Aorta (tissue), 5 donors: ENCODE measurements at regions of chr12 and their contacts with region 1.

Region 1: DNA sequence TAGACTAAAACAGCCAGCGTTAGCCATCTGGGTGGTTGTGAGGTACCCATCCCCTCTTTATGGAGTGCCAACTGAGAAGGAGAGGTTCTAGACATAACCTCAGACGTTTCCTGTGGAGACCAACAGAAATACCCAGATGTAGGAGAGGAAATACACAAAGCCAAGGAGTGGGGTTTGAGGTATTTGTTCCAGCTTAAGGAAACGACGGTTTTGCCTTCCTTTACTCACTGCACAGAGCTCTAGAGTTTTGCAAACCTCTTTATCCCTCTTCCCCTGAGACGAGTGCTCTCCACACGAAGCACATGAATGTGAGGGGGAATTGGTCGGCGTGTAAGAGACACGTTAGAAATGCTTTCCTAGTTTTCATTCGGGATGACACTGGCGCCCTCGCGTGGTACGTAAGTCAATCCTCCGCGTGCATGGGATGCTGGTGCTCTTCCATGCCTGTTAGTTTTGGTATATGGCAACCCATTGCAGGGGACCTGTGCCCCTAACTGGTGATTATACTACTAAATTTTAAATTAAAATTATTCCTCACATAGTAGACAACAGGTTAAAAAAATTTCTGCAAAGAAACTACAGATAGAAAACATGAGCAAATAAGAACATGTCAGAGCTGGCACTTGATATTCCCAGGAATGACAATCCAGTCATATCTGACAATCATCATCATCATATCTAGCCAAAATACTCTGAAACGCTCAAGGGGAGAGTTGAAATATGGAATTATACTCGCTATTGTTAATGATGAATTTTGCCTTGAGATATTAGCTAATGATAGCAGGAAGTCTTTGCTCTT is 121.7 kb downstream of the PPM1H start:
- DNase-seq: peak; percentile 79 to 91
- ATAC-seq: peak; percentile 78
- H3K4me3 ChIP-seq: no peak overlapping the region
- H3K27ac ChIP-seq: no peak overlapping the region
- H3K4me1 ChIP-seq: peaks cover 0 to 4% of the 10 kb centered on the region in 2 donors
- H3K27me3 ChIP-seq: no peaks in the 10 kb centered on the region

Region 2: GRCh38 chr12:62866451-62867082 is 53.3 kb after region 1 on chr12:
- intact Hi-C with region 1: no loop called
- DNase-seq: no peak
- ATAC-seq: peak; percentile 39
- H3K4me3 ChIP-seq: no peak overlapping the region
- H3K27ac ChIP-seq: peak overlapping the region; percentile 87 to 93
- H3K4me1 ChIP-seq: peaks cover 11 to 20% of the 10 kb centered on the region in 2 donors
- H3K27me3 ChIP-seq: no peaks in the 10 kb centered on the region

Region 3: DNA sequence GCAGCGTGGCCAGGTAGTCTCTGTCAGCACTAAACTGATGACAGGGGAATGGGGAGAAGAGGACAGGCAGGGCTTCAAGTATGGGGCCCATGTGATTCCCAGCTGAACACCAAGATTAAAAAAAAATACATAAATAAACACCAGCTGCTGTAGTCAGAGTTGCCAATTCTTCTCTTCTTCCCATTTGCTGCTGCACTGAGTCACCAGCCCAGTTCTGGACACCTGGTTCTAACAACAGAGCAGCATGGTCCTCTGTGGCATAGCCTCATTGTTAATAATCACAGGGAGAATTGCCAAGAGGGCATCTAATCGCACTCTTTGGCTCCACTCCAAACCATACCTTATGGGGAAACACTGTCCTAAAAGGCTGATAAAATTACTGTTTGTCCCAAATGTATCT is 106.6 kb after region 1 on chr12:
- intact Hi-C with region 1: no loop called
- DNase-seq: no peak
- ATAC-seq: no peak
- H3K4me3 ChIP-seq: no peak overlapping the region
- H3K27ac ChIP-seq: no peak overlapping the region
- H3K4me1 ChIP-seq: no peaks in the 10 kb centered on the region
- H3K27me3 ChIP-seq: no peaks in the 10 kb centered on the region

Region 4: DNA sequence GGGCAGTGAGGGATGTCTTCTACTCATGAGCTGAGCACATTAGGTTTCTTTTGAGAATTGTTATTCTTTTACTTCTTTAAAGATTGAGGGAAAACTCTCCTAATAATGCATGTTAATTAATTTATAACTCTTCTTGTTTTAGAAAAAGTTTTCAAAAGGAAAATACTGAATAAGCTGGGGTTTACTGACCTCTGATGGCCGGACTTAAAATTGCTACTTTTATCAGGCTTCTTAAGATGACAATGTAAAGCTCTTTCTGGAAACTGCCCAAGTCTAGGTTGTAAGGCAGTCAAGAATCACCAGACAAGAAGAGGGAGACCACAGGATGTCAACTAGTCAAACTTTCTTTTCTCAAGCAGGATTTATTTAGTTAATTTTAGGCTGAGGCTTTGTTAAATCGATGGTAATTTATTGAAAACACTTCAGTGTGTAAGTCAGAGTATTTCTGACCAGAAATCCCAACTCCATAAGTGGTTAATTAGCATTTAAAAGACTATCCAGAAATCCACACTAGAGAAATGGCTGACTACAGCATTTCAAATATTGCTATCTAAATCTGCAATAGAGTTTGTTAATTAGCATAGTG is 255.7 kb after region 1 on chr12:
- intact Hi-C with region 1: loop called in 1 of 2 experiments (anchors 5 kb)
- DNase-seq: no peak
- ATAC-seq: no peak
- H3K4me3 ChIP-seq: no peak overlapping the region
- H3K27ac ChIP-seq: no peak overlapping the region
- H3K4me1 ChIP-seq: no peaks in the 10 kb centered on the region
- H3K27me3 ChIP-seq: no peaks in the 10 kb centered on the region